ENCODE measurements at regions of chr7 and their contacts with region 1.

Region 1: DNA sequence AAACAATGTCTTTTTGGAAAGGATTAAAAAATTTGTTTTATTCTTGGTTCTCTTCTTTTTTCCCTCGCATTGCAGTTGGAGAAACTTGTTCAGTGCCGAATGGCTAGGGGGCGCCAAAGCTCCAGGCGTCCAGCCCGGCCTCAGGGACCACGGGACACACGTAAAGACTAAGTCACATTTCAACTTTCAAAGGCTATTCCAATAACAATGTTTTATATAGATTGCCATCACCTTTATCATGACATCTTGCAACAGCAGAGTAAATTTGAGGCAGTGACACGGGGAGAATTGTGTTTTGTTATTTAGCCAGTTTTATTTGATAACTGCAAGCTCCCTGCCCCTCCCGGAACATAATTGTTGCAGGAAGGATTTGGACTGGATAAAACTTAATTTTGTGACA is 2.2 kb upstream of the IGFBP3 start:
- DNase-seq: peak; percentile 93 to 94
- H3K4me3 ChIP-seq: no peak overlapping the region
- H3K27ac ChIP-seq: peak overlapping the region; percentile 52
- H3K4me1 ChIP-seq: peaks cover 41% of the 10 kb centered on the region
- H3K27me3 ChIP-seq: no peaks in the 10 kb centered on the region
- CTCF ChIP-seq: peak; percentile 99

Region 2: DNA sequence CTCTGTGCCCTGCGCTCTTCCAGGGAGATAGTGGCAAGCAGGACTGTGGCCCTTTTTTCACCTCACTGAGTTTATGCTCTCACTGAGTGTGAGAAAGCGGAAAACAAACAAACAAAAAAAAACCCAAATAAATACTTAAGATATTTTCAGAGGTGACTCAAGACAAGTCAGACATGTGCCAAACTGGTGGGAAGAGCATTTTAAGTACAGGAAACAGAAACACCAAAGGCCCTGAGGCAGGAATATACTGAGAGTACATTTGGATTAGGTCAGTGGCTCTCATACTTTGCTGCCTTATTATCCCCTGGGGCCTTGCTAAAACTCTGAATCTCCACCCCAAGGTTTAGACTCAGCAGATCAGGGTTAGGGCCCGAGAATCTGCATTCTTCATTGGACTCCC is 109.7 kb after region 1 on chr7:
- CTCF ChIA-PET with region 1: no interaction called
- POLR2A ChIA-PET with region 1: no interaction called
- intact Hi-C with region 1: loop called (anchors 1 kb)
- DNase-seq: peak; percentile 54 to 99
- H3K4me3 ChIP-seq: no peak overlapping the region; the same call in 1 of the 2 replicates
- H3K27ac ChIP-seq: peak overlapping the region; percentile 92
- H3K4me1 ChIP-seq: peaks cover 58% of the 10 kb centered on the region
- H3K27me3 ChIP-seq: no peaks in the 10 kb centered on the region
- CTCF ChIP-seq: no peak

Region 3: DNA sequence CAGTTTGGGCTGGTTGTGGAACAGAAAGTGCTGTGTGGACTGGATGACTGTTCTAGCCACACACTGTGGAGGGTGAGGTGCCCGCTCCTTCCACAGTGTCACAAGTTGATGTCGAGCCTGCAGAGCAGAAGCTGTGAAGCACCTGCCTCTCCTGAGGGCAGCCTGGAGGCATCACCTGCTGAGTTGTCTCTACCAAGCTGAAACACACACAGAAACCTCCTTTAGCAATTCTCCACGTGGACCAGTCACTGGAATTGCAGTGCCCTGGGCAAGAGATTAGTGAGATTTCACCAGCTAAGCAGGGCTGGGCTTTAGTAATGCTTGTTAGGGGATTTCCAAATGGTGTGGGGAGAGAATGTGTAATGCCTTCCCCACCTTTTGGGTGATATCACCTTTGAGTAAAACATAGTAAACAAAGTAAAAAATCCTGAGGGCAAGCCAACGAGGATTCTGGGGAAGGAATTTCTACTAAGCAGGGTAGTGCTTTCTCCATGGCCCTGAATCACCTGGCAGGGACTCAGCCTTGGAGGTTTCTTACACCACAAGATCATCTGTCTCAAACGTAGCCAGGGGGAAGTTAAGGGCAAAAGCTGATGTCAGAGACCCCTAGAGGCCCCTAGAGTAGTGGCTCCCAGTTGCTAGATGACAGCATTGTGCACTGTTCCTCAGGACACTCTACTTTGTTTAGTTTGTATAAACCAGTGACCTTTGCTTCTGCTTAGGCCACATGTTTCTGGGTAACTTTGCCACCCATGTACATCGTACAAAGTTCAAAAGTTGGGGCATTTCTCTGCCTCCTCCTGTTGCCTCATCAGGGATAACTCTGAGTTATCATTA is 230.9 kb after region 1 on chr7:
- CTCF ChIA-PET with region 1: no interaction called
- POLR2A ChIA-PET with region 1: no interaction called
- intact Hi-C with region 1: loop called (anchors 1 kb)
- DNase-seq: peak; percentile 55 to 99
- H3K4me3 ChIP-seq: no peak overlapping the region
- H3K27ac ChIP-seq: peak overlapping the region; percentile 91
- H3K4me1 ChIP-seq: peaks cover 37% of the 10 kb centered on the region
- H3K27me3 ChIP-seq: no peaks in the 10 kb centered on the region
- CTCF ChIP-seq: 0 out of 2 replicates have a peak, but pooled peaks have one; percentile 28

Region 4: GRCh38 chr7:46257766-46258448 is 334.6 kb after region 1 on chr7:
- CTCF ChIA-PET with region 1: no interaction called
- POLR2A ChIA-PET with region 1: interaction called, 3 read pairs
- intact Hi-C with region 1: loop called (anchors 1 kb)
- DNase-seq: peak; percentile 41 to 87
- H3K4me3 ChIP-seq: no peak overlapping the region
- H3K27ac ChIP-seq: peak overlapping the region; percentile 12; the same call in 1 of the 2 replicates
- H3K4me1 ChIP-seq: peaks cover 23% of the 10 kb centered on the region
- H3K27me3 ChIP-seq: no peaks in the 10 kb centered on the region
- CTCF ChIP-seq: no peak

Region 5: DNA sequence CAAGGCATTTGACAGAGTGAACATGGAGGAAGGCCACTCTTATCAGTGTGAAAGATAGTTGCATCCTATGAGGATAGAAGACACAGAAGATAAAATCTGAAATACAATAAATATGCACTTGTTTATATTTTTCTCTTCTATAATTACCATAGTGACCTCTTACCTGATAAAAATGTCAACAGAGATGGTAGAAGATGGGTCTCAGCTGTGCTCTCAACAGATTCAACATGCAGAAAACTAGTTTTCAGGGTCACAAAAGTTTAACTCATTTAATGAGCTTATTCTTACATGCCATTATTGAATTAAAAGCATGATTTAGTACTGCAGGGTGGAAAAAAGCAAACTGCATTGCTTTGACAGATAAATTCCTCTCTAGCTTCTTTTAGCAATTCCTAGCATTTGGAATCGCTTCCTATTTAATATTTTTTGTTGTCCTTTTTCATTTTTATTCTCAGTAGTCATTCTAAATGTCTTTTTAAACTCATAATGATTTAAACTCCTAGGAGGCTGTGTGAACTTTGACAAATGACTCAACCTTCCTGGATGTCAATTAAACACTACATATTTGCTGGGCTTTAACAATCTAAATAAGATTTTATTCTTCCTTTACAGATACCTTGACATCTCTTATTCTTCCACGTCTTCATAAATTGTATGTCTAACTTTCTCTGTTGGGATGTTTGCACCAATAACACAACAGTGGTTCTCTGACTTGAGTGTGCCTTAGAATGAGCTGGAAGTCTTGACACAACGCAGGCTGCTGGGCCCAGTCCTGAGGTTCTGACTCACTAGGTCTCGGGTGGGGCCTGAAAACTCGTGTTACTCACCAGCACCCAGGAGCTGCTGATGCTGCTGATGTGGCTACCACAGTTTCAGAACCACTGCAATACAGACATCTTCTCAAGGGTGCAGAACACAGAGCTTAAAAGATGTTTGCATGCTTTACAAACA is 563.2 kb after region 1 on chr7:
- CTCF ChIA-PET with region 1: interaction called, 4 read pairs
- POLR2A ChIA-PET with region 1: no interaction called
- intact Hi-C with region 1: loop called (anchors 2 kb)
- DNase-seq: no peak
- H3K4me3 ChIP-seq: no peak overlapping the region
- H3K27ac ChIP-seq: peak overlapping the region; percentile 18
- H3K4me1 ChIP-seq: peaks cover 26% of the 10 kb centered on the region
- H3K27me3 ChIP-seq: no peaks in the 10 kb centered on the region
- CTCF ChIP-seq: no peak

Region 6: DNA sequence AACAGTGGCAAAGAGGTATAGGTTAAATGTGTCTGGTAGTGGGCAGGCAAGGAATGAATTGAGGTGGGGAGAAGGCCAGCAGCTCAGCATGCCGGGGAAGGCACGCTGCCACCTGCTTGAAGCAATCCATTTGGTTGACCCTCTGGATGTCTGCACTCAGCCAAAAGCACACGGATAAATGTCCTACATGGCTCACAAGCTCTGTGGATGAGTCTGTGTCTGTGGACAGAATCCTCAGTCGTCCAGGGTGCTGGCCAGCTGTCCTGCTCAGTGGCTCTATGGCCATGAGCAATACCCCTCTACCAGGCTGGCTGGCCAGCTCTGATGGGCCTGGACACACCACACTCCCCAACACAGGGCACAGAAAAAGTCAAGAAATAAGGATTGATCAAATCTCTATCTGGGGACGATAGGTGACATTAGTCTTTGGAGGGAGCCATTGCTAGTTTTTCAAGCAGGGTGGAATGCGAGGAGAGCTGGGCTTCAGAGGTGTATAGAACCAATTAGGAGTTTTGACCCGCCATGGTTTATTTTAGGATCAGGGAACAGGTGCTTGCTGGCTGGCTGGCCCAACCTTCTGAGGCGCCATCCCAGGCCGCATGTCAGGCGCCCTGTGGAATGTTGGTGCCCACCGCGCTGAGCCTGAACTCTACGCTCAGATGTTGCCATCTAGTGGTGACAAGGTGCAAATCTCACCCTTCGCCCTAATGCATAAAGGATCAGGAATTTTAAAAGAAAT is 1165.2 kb after region 1 on chr7:
- CTCF ChIA-PET with region 1: interaction called, 6 read pairs
- POLR2A ChIA-PET with region 1: no interaction called
- intact Hi-C with region 1: loop called (anchors 1 kb)
- DNase-seq: peak; percentile 56 to 67
- H3K4me3 ChIP-seq: no peak overlapping the region
- H3K27ac ChIP-seq: no peak overlapping the region
- H3K4me1 ChIP-seq: no peaks in the 10 kb centered on the region
- H3K27me3 ChIP-seq: no peaks in the 10 kb centered on the region
- CTCF ChIP-seq: peak; percentile 99